WTC11 (cell line): ENCODE measurements at regions of chr1 and their contacts with region 1.

Region 1: GRCh38 chr1:145858894-145859490 is at the start of gene PIAS3:
- DNase-seq: peak; percentile 98
- ATAC-seq: peak; percentile 82
- H3K4me3 Mint-ChIP-seq: peak within 1 kb of the TSS; percentile 98
- H3K27ac Mint-ChIP-seq: peak within 1 kb of the TSS; percentile 92
- H3K4me1 Mint-ChIP-seq: peaks cover 17% of the 10 kb centered on the region
- H3K27me3 Mint-ChIP-seq: no peaks in the 10 kb centered on the region
- CTCF ChIP-seq: no peak
- total RNA-seq, gene PIAS3: 44.9 to 52.4 TPM (median 49.6 TPM) in 3 replicates

Region 2: GRCh38 chr1:145740266-145740665 is 118.7 kb before region 1 on chr1:
- CTCF ChIA-PET with region 1: no interaction called
- POLR2A ChIA-PET with region 1: no interaction called
- DNase-seq: no peak
- ATAC-seq: no peak
- H3K4me3 Mint-ChIP-seq: no peak overlapping the region
- H3K27ac Mint-ChIP-seq: no peak overlapping the region
- H3K4me1 Mint-ChIP-seq: no peaks in the 10 kb centered on the region
- H3K27me3 Mint-ChIP-seq: no peaks in the 10 kb centered on the region
- CTCF ChIP-seq: no peak

Region 3: DNA sequence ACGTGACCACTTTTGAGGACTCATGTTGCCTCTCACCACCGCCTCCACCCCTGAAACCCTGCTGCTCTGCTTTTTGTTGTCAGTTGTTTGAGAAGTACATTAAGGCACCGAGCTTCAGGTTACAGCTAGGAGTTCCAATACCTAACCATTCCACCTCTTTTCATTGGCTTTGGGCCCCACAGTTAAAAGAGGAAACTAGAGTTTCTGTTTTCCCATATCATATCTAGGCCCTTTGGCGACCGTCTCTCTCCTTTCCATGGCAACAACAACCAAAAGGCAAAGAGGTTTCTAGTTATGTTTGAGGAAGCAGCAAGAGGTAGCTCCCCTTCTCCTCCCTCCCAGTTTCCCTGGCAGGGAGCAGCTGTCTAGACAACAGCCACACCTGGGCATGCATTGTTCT is 20.8 kb after region 1 on chr1:
- CTCF ChIA-PET with region 1: interaction called, 40 read pairs
- POLR2A ChIA-PET with region 1: interaction called, 4 read pairs
- DNase-seq: no peak
- ATAC-seq: peak; percentile 73
- H3K4me3 Mint-ChIP-seq: no peak overlapping the region
- H3K27ac Mint-ChIP-seq: peak overlapping the region; percentile 76
- H3K4me1 Mint-ChIP-seq: peaks cover 21% of the 10 kb centered on the region
- H3K27me3 Mint-ChIP-seq: peaks cover 36% of the 10 kb centered on the region
- CTCF ChIP-seq: no peak

Region 4: GRCh38 chr1:145901318-145902021 is 42.5 kb after region 1 on chr1:
- CTCF ChIA-PET with region 1: interaction called, 10 read pairs
- POLR2A ChIA-PET with region 1: no interaction called
- DNase-seq: peak; percentile 37
- ATAC-seq: peak; percentile 90
- H3K4me3 Mint-ChIP-seq: no peak overlapping the region
- H3K27ac Mint-ChIP-seq: no peak overlapping the region
- H3K4me1 Mint-ChIP-seq: no peaks in the 10 kb centered on the region
- H3K27me3 Mint-ChIP-seq: peaks cover 14% of the 10 kb centered on the region
- CTCF ChIP-seq: no peak

Region 5: DNA sequence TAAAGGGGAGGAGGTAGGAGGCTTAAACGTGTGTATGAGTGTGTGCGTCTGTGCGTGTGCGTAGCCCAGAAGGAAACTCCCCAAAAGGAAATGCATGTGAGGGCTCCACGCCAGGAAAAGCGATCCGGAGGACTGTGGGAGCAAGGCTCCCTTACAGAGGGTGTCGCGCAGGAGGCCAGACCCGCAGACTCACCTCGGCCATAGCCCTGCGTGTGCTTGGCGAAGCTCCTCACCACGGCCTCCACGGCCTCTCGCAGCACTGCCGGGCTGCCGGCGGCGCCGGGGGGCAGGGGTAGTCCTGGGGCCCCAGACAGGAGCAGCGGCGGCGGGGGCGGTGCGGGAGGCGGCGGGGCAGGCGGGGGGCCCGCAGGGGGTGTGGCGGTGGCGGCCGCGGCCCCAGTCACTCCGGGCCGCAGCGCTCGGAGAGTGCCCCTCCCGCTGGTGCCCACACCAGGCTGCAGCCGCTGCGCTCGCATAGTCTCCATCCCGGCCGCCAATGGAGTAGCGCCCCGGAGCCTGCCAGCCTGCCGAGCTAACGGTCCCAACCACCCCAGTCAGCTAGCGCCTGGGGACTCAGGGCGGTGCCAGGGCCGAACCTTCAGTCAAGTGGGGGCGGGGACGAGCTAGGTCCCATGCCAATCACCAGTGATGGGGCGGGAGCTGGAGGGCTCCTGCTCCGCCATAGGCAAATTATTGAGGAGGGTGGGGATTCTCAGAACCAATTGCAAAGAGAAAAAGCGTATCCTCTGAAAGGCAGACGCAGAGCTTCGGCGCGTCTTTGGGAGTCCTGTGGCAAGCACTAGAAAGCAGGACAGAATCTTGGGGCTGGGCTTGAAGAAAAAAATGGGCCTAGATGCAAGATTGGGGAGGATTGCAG is 98.7 kb after region 1 on chr1 and contains the start of gene LIX1L:
- CTCF ChIA-PET with region 1: interaction called, 4 read pairs
- POLR2A ChIA-PET with region 1: interaction called, 16 read pairs
- DNase-seq: peak; percentile 96
- ATAC-seq: peak; percentile 86
- H3K4me3 Mint-ChIP-seq: peak within 1 kb of the TSS; percentile 70
- H3K27ac Mint-ChIP-seq: peak within 1 kb of the TSS; percentile 14; the same call in 1 of the 2 replicates
- H3K4me1 Mint-ChIP-seq: peaks cover 31% of the 10 kb centered on the region
- H3K27me3 Mint-ChIP-seq: peaks cover 92% of the 10 kb centered on the region
- CTCF ChIP-seq: no peak
- total RNA-seq, gene LIX1L: 3.0 to 3.8 TPM (median 3.8 TPM) in 3 replicates

Region 6: DNA sequence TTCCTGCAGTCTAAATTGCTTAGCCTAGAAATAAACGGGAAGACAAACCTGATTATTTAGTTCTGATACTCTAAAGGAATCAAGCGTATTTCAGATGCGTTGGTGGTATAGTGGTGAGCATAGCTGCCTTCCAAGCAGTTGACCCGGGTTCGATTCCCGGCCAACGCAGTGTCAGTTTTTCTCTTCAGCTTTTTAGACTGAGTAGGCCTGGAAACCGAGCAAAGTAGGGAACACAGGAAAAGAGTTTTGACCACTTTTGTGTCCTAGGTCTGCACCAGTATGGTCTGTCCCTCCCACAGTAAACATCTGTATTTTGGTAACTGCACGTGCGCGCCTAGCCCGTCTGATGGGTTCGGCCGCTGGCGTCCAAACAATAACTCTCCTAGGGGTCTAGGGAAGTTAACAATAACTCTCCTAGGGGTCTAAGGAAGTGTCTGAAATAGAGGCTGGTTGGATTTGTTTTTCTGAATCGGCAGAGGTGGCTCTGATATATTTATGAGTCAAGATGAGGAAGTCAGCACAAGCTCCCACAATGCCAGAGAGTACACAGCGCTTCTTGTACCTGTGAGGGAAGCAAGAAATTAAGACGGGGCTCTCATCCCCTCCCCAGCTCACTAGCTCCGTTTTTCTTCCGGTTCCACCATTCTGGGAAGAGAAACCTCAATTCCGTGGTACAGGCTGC is 178.1 kb after region 1 on chr1:
- CTCF ChIA-PET with region 1: interaction called, 9 read pairs
- POLR2A ChIA-PET with region 1: interaction called, 20 read pairs
- DNase-seq: peak; percentile 82
- ATAC-seq: peak; percentile 16
- H3K4me3 Mint-ChIP-seq: peak overlapping the region; percentile 100
- H3K27ac Mint-ChIP-seq: peak overlapping the region; percentile 78
- H3K4me1 Mint-ChIP-seq: peaks cover 10% of the 10 kb centered on the region
- H3K27me3 Mint-ChIP-seq: peaks cover 4% of the 10 kb centered on the region; the same call in 1 of the 2 replicates
- CTCF ChIP-seq: no peak